Right ventricle myocardium superior (tissue), 1 donor: ENCODE measurements at regions of chr2 and their contacts with region 1.

Region 1: GRCh38 chr2:121356058-121356640 is 71.1 kb upstream of the TFCP2L1 start:
- DNase-seq: no peak
- ATAC-seq: peak; percentile 37

Region 2: GRCh38 chr2:121095257-121096080 is 260.7 kb before region 1 on chr2:
- intact Hi-C with region 1: loop called (anchors 5 kb)
- DNase-seq: peak; percentile 71
- ATAC-seq: peak; percentile 64

Region 3: DNA sequence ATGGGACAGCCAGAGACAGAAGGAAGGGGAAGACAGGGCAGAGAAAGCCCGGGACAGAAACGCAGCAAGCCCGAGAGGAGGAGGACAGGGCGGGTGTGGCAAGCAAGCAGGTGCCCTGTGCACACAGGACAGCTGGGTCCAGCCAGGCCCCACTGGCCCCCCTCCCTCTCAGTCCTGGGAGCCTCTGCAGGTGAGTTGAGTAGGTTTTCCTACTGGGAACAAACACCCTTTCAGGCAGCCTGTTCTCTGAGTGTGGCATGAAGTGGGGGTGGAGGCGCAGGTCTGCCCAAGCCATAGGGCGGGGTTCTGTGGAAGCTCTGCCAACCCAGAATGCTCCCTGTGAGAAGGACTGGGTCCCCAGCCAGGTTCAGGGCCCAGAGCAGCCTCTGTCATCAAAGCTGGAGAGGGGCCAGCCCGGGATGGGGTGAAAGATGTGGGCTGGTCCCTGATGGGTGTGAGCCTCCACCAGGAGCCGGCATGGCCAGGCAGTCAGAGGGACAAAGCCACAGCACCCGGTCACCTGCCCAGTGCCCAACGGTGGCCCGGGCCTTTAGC is 200.6 kb before region 1 on chr2:
- intact Hi-C with region 1: no loop called
- DNase-seq: no peak
- ATAC-seq: peak; percentile 29

Region 4: DNA sequence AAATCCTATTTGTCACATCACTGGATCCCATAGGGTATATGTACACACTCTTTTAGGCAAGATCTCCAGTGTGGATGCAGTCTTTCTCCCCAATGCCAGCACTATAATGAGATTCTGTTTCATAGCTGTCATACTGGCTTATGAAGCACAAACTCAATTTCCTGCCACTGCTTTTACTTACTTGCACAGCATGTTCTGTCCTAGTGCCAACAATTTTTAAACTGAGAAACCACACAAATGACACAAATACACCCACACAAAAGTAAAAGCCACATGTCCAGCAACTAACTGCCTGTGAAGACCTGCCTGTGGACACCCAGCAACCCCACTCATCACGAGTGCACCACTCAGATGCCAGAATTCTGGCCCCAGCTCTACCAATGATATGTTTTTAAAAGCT is 144.9 kb after region 1 on chr2:
- intact Hi-C with region 1: no loop called
- DNase-seq: no peak
- ATAC-seq: no peak